Prostate gland (tissue), 2 donors: ENCODE measurements at regions of chr10 and their contacts with region 1.

Region 1: GRCh38 chr10:11036407-11037011 is 18.8 kb downstream of the CELF2 start:
- DNase-seq: peak; percentile 13
- H3K4me3 ChIP-seq: no peak overlapping the region
- H3K27ac ChIP-seq: no peak overlapping the region
- H3K4me1 ChIP-seq: no peaks in the 10 kb centered on the region
- H3K27me3 ChIP-seq: no peaks in the 10 kb centered on the region
- CTCF ChIP-seq: peak; percentile 13 to 58 (median 54)
- POLR2A ChIP-seq: no peak

Region 2: DNA sequence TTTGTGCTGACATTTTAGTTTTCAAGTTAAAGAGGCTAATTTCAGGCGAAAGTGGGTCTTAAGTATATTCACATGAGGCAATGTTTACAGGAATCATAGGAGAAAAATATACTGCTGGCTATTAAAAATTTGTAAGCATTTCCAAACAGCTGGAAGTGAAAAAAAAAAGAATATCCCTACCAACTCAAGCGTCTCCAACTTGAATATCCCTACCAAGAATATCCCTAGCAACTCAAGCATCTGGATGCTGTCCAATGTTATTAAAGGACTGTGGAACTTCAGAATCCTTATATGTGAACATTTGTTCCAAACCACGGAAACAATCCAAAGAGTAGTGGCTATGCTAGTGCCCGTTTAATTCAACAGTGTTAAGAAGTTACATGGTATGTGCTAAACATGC is 1679.0 kb before region 1 on chr10:
- intact Hi-C with region 1: loop called (anchors 5 kb)
- DNase-seq: no peak
- H3K4me3 ChIP-seq: no peak overlapping the region
- H3K27ac ChIP-seq: no peak overlapping the region
- H3K4me1 ChIP-seq: no peaks in the 10 kb centered on the region
- H3K27me3 ChIP-seq: no peaks in the 10 kb centered on the region
- CTCF ChIP-seq: no peak
- POLR2A ChIP-seq: no peak